WTC11 (cell line): ENCODE measurements at regions of chr9 and their contacts with region 1.

Region 1: DNA sequence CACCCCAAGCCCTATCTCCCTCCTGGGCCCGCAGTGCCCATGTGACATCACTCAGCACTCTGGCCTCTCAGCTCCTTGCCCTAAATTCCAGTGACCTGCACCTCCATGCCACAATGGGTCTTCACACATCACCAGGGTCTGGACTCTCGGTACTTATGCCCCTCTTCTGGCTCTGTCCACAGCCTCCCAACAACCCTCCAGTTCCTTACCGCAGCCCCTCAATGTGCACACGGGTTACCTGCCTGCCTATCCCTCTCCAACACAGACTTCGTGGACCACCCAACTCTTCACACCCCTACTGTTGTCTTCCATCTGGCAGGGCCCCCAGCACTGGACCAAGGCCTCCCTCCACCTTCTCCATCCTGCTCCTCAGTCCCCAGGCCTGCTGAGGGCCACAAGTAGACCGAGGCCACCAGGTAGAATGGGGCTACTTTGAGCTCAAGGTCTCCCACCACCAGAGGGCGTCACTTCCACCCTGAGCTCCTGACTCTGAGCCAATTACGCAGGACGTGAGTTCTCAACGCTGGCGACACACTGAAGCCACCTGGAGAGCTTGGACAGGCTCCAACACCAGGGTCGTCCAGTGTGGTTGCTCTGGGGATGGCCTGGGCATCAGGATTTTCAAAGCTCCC is 172.1 kb downstream of the GABBR2 start:
- DNase-seq: peak; percentile 74
- ATAC-seq: peak; percentile 93
- H3K4me3 Mint-ChIP-seq: no peak overlapping the region
- H3K27ac Mint-ChIP-seq: no peak overlapping the region
- H3K4me1 Mint-ChIP-seq: no peaks in the 10 kb centered on the region
- H3K27me3 Mint-ChIP-seq: no peaks in the 10 kb centered on the region; the same call in none of the 2 replicates
- CTCF ChIP-seq: peak; percentile 72

Region 2: GRCh38 chr9:98523231-98523896 is 13.3 kb before region 1 on chr9:
- CTCF ChIA-PET with region 1: interaction called, 12 read pairs
- POLR2A ChIA-PET with region 1: no interaction called
- DNase-seq: peak; percentile 40
- ATAC-seq: peak; percentile 88
- H3K4me3 Mint-ChIP-seq: no peak overlapping the region
- H3K27ac Mint-ChIP-seq: no peak overlapping the region
- H3K4me1 Mint-ChIP-seq: peaks cover 3% of the 10 kb centered on the region; the same call in 1 of the 2 replicates
- H3K27me3 Mint-ChIP-seq: no peaks in the 10 kb centered on the region
- CTCF ChIP-seq: no peak

Region 3: GRCh38 chr9:98575379-98576346 is 39.0 kb after region 1 on chr9:
- CTCF ChIA-PET with region 1: interaction called, 11 read pairs
- POLR2A ChIA-PET with region 1: no interaction called
- DNase-seq: no peak
- ATAC-seq: no peak
- H3K4me3 Mint-ChIP-seq: no peak overlapping the region
- H3K27ac Mint-ChIP-seq: no peak overlapping the region
- H3K4me1 Mint-ChIP-seq: no peaks in the 10 kb centered on the region
- H3K27me3 Mint-ChIP-seq: no peaks in the 10 kb centered on the region; the same call in 1 of the 2 replicates
- CTCF ChIP-seq: no peak

Region 4: DNA sequence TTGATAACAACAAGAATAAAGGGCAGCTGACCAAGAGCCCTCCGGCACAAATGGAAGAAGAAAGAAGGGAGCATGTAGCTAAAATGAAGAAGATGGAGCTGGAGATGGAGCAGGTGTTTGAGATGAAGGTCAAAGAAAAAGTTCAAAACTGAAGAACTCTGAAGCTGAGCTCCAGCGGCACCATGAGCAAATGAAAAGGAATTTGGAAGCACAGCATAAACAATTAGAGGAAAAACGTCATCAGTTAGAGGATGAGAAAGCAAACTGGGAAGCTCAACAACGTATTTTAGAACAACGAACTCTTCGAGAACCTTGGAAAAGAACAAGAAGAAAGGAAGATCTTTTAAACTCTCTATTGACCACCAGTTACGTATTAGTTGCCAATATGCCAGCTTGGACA is 71.1 kb after region 1 on chr9:
- CTCF ChIA-PET with region 1: no interaction called
- POLR2A ChIA-PET with region 1: no interaction called
- DNase-seq: no peak
- ATAC-seq: no peak
- H3K4me3 Mint-ChIP-seq: no peak overlapping the region
- H3K27ac Mint-ChIP-seq: no peak overlapping the region
- H3K4me1 Mint-ChIP-seq: peaks cover 6% of the 10 kb centered on the region
- H3K27me3 Mint-ChIP-seq: no peaks in the 10 kb centered on the region
- CTCF ChIP-seq: no peak

Region 5: GRCh38 chr9:98707166-98708102 is 170.8 kb after region 1 on chr9:
- CTCF ChIA-PET with region 1: interaction called, 17 read pairs
- POLR2A ChIA-PET with region 1: no interaction called
- DNase-seq: peak; percentile 88
- ATAC-seq: peak; percentile 82
- H3K4me3 Mint-ChIP-seq: peak overlapping the region; percentile 64
- H3K27ac Mint-ChIP-seq: no peak overlapping the region
- H3K4me1 Mint-ChIP-seq: peaks cover 8% of the 10 kb centered on the region
- H3K27me3 Mint-ChIP-seq: peaks cover 78% of the 10 kb centered on the region
- CTCF ChIP-seq: peak; percentile 39; the same call in 1 of the 2 replicates